ENCODE measurements at regions of chr4 and their contacts with region 1.

Region 1: DNA sequence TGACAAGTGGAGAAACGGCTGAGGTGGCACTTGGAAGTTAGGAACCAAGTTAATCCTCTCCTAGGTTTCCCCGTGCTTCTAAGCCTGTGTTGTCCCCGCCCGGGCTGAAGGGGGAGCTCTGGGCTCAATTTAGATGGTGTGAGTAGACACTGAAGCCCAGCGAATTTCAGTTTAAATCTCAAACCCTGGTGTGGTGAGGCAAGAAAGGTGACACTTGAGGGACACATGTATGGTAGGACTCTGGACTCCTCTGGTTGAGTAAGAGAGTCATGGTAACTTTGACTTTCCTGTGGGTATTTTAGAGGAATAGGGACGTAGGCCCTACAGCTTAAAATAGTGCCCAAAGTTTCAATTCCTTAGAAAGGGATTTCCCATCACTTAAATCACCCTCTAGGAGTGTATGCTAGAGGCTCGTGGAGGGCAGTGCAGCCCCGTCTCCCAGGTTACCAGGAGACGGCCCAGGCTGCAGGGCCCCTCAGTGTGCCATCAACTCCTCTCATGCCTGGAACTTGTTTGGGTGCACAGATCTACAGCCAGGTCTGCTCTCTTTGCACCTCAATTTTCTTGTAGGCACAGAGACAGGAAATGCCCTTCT is 24.0 kb downstream of the HAND2 start:
- DNase-seq: peak; percentile 63
- H3K4me3 ChIP-seq: no peak overlapping the region
- H3K27ac ChIP-seq: peak overlapping the region in 3 of 4 donors; percentile 9 to 78 (median 11)
- H3K4me1 ChIP-seq: peaks cover 3 to 18% (median 5%) of the 10 kb centered on the region in 4 donors
- H3K27me3 ChIP-seq: peaks cover 96% of the 10 kb centered on the region
- CTCF ChIP-seq: peak; percentile 69 to 78 (median 71)
- EP300 ChIP-seq: no peak
- POLR2A ChIP-seq: no peak

Region 2: DNA sequence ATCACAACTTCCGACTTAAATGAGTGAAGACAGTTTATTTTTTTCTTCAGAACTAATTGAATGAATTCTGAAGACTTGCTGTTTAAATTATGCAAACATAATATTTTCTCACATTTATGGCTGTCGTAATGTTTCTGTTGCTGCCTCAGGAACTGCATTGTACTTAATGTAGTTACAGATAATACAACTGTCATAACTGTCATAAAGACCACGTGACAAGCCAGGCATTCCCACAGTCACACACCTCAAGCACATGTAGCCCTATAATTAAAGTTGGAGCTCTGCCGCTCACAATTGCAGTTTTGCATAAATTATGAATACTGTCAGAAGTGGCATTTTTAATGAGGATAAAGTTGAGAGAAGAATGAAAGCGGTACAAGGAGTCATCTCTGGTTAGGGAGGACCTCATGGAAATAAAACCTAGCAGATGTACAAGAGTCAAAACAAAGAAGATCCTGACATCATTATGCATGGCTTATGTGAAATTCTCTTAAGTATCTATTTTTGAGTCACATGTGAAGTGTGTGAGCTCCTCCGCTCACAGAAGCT is 1731.3 kb before region 1 on chr4:
- in situ Hi-C with region 1: no loop called
- intact Hi-C with region 1: no loop called
- DNase-seq: no peak
- H3K4me3 ChIP-seq: no peak overlapping the region
- H3K27ac ChIP-seq: no peak overlapping the region
- H3K4me1 ChIP-seq: no peaks in the 10 kb centered on the region
- H3K27me3 ChIP-seq: no peaks in the 10 kb centered on the region
- CTCF ChIP-seq: no peak
- EP300 ChIP-seq: no peak
- POLR2A ChIP-seq: no peak

Region 3: DNA sequence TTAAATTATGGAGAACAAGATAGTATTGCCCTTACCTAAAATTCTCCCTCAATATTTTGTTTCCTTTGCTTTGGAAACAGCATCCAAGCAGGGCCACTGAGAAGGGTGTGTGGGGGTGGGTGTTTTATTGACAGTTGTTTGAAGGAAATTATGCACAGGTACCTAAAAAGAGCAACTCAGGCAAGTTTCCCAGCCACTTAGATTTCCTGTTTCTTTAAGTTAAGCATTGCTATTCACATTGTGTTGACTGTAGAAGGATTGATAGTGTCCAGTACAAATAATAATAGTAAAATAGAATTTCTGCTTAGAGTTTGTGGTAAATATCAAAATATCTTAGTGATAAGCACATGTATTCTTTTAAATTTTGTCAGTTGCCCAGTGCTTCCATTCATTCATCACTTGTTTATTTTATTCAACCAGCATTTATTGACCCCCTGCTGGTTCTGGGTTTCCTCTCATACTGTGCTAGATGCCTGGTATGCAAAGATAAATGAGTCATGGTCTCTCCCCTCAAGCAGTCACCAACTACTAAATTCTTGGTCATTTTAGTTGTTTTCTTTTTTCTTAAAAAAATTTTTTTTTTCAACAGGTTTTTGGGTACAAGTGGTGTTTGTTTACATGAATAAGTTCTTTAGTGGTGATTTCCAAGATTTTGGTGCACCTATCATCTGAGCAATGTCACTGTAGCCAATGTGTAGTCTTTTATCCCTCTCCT is 287.5 kb before region 1 on chr4:
- in situ Hi-C with region 1: no loop called
- intact Hi-C with region 1: no loop called
- DNase-seq: no peak
- H3K4me3 ChIP-seq: no peak overlapping the region
- H3K27ac ChIP-seq: no peak overlapping the region
- H3K4me1 ChIP-seq: peaks cover 0 to 20% (median 11%) of the 10 kb centered on the region in 4 donors
- H3K27me3 ChIP-seq: no peaks in the 10 kb centered on the region
- CTCF ChIP-seq: no peak
- EP300 ChIP-seq: no peak
- POLR2A ChIP-seq: no peak

Region 4: DNA sequence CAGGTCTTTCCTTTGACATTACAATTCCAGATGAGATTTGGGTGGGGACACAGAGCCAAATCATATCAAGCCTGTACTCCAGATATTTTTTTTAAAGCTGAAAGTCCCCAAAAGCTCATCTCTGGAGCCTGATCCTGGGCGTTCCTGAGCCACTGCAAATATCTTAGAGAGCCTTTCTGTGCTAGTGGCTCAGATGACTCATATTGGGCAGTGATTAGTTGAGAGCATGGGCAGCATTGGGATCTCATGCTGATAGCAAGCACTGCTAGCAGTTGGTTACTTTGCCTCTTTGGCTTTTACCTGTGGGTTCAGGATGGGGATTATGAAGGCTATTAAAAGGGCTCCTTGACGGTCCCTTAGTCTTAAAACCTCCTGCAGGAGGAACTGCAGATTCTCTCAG is 55.7 kb before region 1 on chr4:
- in situ Hi-C with region 1: no loop called
- intact Hi-C with region 1: no loop called
- DNase-seq: no peak
- H3K4me3 ChIP-seq: no peak overlapping the region
- H3K27ac ChIP-seq: no peak overlapping the region
- H3K4me1 ChIP-seq: peaks cover 0 to 6% (median 1%) of the 10 kb centered on the region in 4 donors
- H3K27me3 ChIP-seq: no peaks in the 10 kb centered on the region
- CTCF ChIP-seq: no peak
- EP300 ChIP-seq: no peak
- POLR2A ChIP-seq: no peak

Region 5: GRCh38 chr4:173752610-173753230 is 246.7 kb after region 1 on chr4:
- in situ Hi-C with region 1: loop called in 1 of 4 experiments (anchors 10 kb)
- intact Hi-C with region 1: no loop called
- DNase-seq: peak; percentile 31
- H3K4me3 ChIP-seq: no peak overlapping the region
- H3K27ac ChIP-seq: no peak overlapping the region
- H3K4me1 ChIP-seq: no peaks in the 10 kb centered on the region
- H3K27me3 ChIP-seq: no peaks in the 10 kb centered on the region
- CTCF ChIP-seq: peak; percentile 22 to 48 (median 30)
- EP300 ChIP-seq: no peak
- POLR2A ChIP-seq: no peak

Region 6: DNA sequence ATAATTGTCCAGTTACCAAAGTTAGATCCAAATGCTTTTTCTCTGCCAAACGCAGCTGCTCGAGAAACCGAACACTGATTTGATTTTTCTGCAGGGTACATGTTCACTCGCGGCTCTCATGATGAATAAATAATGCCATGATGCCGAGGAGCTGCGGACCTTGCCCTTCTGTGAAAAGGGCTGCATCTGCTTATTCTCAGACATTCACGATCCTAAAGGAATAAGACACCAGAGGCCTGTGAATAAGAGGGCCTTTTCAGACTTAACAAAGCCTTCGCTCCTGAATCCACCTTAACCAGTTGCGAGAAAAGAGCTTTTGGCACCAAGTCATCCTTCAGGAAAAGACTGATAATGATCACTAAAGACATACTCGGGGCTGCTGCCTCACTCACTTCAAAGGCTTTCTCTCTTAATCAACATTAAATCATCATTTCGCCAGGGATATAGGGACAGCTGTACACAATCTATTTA is 630.0 kb after region 1 on chr4:
- in situ Hi-C with region 1: loop called in 3 of 4 experiments (anchors 25 kb)
- intact Hi-C with region 1: no loop called
- DNase-seq: no peak
- H3K4me3 ChIP-seq: peak overlapping the region in 3 of 4 donors; percentile 4 to 18 (median 5)
- H3K27ac ChIP-seq: peak overlapping the region; percentile 12 to 74 (median 58)
- H3K4me1 ChIP-seq: no peaks in the 10 kb centered on the region
- H3K27me3 ChIP-seq: no peaks in the 10 kb centered on the region
- CTCF ChIP-seq: no peak
- EP300 ChIP-seq: no peak
- POLR2A ChIP-seq: no peak

Region 7: DNA sequence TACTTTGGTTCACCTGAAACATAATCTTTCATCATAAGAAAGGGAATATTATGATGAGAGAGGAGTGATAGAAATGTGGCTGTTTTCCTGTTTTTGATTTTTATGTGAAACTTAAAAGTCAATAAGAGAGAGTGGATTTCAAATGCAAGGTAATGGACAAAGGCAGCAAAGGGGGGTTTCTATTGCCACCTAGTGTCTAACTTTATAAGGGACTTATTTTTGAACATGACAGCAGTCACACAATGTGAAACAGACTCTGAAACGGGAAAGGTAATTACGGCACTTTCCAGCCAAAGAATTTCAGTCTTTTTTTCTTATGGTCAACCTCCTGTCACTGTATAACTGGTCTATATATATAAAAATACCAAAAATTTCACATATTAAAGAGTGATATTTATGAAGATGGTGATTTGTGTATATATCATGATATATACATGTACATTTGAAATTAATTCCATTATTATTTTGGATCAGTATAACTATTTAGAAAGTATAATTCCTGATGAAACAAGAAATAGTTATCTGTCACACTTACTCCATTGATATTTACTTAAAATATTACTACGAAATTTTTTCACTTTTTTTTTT is 650.3 kb after region 1 on chr4:
- in situ Hi-C with region 1: loop called in 1 of 4 experiments (anchors 25 kb)
- intact Hi-C with region 1: no loop called
- DNase-seq: no peak
- H3K4me3 ChIP-seq: no peak overlapping the region
- H3K27ac ChIP-seq: peak overlapping the region in 3 of 4 donors; percentile 39 to 72 (median 60)
- H3K4me1 ChIP-seq: no peaks in the 10 kb centered on the region
- H3K27me3 ChIP-seq: no peaks in the 10 kb centered on the region
- CTCF ChIP-seq: peak; percentile 46 to 61 (median 54)
- EP300 ChIP-seq: no peak
- POLR2A ChIP-seq: no peak

Measured in transverse colon (tissue), 4 donors.